ENCODE measurements at regions of chr12 and their contacts with region 1.

Region 1: GRCh38 chr12:47032644-47033043 is 46.8 kb upstream of the PCED1B start:
- DNase-seq: peak; percentile 10
- CTCF ChIP-seq: peak; percentile 30

Region 2: GRCh38 chr12:47021298-47021697 is 11.3 kb before region 1 on chr12:
- CTCF ChIA-PET with region 1: interaction called, 54 read pairs
- POLR2A ChIA-PET with region 1: no interaction called
- DNase-seq: peak; percentile 27
- CTCF ChIP-seq: peak; percentile 70

Region 3: DNA sequence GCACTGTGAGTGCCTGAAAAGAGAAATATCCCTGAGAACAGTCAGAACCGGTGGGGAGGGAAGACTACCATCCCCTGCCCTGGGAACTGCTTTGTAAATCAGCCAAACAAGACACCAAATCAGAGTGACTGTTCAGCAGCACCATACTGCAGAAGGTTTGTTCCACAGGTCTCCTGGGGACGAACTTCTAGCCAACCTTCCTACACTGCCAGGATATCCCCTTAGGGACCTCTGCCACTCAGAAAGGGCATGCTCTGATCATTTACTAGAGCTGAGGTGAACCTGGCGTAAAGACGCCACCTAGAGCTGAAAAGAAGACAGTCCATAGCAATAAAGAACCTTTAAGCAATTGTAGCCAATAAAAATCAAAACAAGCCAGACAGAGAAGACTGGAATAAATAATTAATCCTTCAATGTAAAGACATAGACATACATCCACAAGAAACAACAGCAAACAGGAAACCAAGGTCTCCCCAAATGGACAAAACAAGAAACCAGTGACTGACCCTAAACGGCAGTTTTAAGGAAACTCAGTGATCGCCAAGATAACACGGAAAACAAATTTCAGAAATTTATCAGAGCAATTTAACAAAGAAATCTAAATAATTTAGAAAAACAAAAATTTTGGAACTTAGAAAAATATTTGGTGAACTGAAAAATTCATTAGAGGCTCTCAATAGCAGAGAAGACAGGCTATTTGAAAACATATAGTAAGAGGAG is 275.2 kb after region 1 on chr12:
- CTCF ChIA-PET with region 1: interaction called, 17 read pairs
- POLR2A ChIA-PET with region 1: no interaction called
- DNase-seq: peak; percentile 48
- CTCF ChIP-seq: peak; percentile 70

Region 4: GRCh38 chr12:47397664-47398281 is 365.1 kb after region 1 on chr12:
- CTCF ChIA-PET with region 1: interaction called, 12 read pairs
- POLR2A ChIA-PET with region 1: no interaction called
- DNase-seq: peak; percentile 28
- CTCF ChIP-seq: peak; percentile 39

Region 5: DNA sequence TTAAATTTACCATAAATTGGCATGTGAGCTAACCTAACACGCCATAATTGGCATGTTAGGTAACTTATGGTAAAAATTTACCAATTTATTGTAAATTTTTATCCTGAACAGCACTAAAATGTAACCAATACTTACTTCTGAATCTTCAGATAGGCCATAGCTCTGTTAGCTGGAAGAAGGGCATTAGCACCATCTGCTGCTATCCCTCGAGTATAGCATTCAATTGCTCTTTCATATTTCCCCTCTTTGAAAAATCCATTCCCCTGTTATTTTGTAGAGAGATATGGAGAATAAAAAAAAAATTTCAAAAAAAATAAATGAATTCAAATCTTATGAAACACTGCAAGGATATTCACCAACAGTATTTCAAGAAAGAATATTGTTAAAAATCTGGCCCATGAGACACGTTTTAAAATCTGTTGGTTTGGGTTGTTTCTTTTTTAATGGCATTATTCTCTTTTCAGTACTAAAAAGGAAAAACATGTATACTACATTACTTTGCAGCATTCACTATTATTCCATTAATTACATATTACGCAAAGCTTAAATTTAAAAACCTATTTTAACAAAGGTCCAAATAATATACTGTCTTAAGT is 654.1 kb after region 1 on chr12:
- CTCF ChIA-PET with region 1: interaction called, 25 read pairs
- POLR2A ChIA-PET with region 1: no interaction called
- DNase-seq: peak; percentile 38
- CTCF ChIP-seq: peak; percentile 55

Measured in GM10248 (cell line).